Breast epithelium (tissue), 4 donors: ENCODE measurements at regions of chr13 and their contacts with region 1.

Region 1: DNA sequence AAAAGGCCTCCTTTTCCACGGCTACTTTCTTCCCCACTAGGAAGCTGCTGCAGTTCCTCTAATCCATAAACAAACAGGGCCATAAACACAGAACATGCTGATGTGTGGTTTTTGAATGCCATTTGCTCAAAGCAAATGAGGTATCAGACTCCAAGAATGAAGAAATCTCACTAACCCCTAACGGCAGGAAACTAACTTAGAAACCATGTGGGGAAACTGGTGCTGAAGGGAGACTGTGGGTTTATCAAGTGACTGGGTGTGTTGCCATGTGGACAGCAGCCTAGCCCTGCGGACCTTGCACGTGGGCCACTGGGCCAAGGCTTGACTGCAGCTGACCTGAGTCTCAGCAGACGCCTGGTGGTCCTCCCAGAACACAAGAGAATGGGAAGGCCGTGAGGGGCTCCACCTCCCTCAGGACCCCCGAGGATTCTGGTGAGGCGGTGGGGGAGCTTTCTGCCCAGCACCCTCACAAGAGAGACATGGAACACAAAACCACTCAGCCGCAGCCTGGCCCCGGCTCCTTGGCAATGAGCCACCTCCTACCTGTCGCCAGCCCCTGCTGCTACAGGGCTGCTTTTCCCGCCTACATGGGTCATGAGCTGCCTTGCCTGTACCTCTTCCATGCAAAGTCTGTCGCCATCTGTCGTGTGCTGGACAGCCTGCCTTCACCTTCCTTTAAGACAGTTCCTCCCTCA is 10.6 kb downstream of the SLC15A1 start:
- DNase-seq: no peak
- H3K4me3 ChIP-seq: no peak overlapping the region
- H3K27ac ChIP-seq: no peak overlapping the region
- H3K4me1 ChIP-seq: no peaks in the 10 kb centered on the region
- H3K27me3 ChIP-seq: no peaks in the 10 kb centered on the region
- CTCF ChIP-seq: no peak
- POLR2A ChIP-seq: no peak

Region 2: GRCh38 chr13:97975280-97975847 is 766.5 kb before region 1 on chr13:
- intact Hi-C with region 1: no loop called
- DNase-seq: no peak
- H3K4me3 ChIP-seq: peak overlapping the region; percentile 78 to 93 (median 91)
- H3K27ac ChIP-seq: peak overlapping the region; percentile 98 to 99
- H3K4me1 ChIP-seq: peaks cover 0 to 13% of the 10 kb centered on the region in 2 donors
- H3K27me3 ChIP-seq: no peaks in the 10 kb centered on the region
- CTCF ChIP-seq: no peak
- POLR2A ChIP-seq: no peak

Region 3: GRCh38 chr13:98672944-98673545 is 68.8 kb before region 1 on chr13:
- intact Hi-C with region 1: loop called (anchors 2 kb)
- DNase-seq: peak; percentile 59 to 62
- H3K4me3 ChIP-seq: peak overlapping the region in 1 of 3 donors; percentile 21
- H3K27ac ChIP-seq: peak overlapping the region in 1 of 2 donors; percentile 7
- H3K4me1 ChIP-seq: no peaks in the 10 kb centered on the region
- H3K27me3 ChIP-seq: no peaks in the 10 kb centered on the region
- CTCF ChIP-seq: peak; percentile 80 to 89 (median 86)
- POLR2A ChIP-seq: no peak

Region 4: GRCh38 chr13:98678741-98679140 is 63.1 kb before region 1 on chr13:
- intact Hi-C with region 1: loop called (anchors 2 kb)
- DNase-seq: no peak
- H3K4me3 ChIP-seq: no peak overlapping the region
- H3K27ac ChIP-seq: no peak overlapping the region
- H3K4me1 ChIP-seq: no peaks in the 10 kb centered on the region
- H3K27me3 ChIP-seq: no peaks in the 10 kb centered on the region
- CTCF ChIP-seq: no peak
- POLR2A ChIP-seq: no peak

Region 5: DNA sequence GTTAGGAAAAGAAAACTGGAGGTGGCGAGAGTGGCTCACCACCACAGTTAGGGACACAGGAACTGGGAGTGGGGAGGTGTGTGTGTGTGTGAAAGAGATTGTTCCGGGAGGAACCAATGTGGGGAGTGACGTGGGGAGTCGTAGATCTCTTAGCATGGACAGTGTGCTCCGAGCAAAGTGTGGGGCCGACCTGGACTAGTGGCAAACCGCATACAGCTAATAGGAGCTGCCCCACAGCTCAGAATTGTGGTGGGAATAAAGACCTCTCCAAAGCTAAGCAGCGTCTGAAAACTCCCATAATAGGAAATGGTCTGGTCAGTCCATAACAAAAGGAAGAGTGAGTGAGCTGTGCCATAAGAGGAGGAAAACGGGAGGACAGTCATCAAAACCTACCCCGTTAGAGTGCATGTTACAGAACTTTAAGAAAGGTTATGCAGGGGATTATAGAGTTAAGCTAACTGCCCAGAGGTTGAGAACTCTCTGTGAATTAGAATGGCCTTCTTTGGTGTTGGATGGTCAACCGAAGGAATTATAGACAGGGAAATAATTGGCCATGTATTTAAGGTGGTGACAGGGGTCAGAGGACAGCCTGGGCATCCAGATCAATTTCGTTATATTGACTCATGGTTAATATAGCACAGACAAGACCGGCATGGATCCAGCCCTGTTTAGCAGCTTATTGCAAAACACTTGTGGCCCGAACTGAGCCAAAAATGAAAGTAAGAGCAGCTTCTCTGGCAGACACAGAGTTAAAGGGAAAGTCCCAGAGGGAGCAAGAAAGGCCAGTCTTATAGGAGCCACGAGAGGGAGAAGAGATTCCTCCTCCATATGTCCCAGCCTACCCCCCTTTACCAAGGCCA is 19.5 kb after region 1 on chr13:
- intact Hi-C with region 1: no loop called
- DNase-seq: no peak
- H3K4me3 ChIP-seq: peak overlapping the region in 2 of 3 donors; percentile 34 to 45
- H3K27ac ChIP-seq: no peak overlapping the region
- H3K4me1 ChIP-seq: no peaks in the 10 kb centered on the region
- H3K27me3 ChIP-seq: no peaks in the 10 kb centered on the region
- CTCF ChIP-seq: no peak
- POLR2A ChIP-seq: no peak